ENCODE measurements at regions of chr9 and their contacts with region 1.

Region 1: GRCh38 chr9:83937911-83938323 is 16.7 kb upstream of the KIF27 start:
- DNase-seq: no peak
- H3K4me3 ChIP-seq: no peak overlapping the region
- H3K27ac ChIP-seq: no peak overlapping the region
- H3K4me1 ChIP-seq: peaks cover 18% of the 10 kb centered on the region
- H3K27me3 ChIP-seq: no peaks in the 10 kb centered on the region
- CTCF ChIP-seq: peak; percentile 55 to 79 (median 73)
- POLR2A ChIP-seq: no peak

Region 2: GRCh38 chr9:84170521-84171141 is 232.7 kb after region 1 on chr9:
- intact Hi-C with region 1: loop called (anchors 10 kb)
- DNase-seq: no peak
- H3K4me3 ChIP-seq: no peak overlapping the region
- H3K27ac ChIP-seq: no peak overlapping the region
- H3K4me1 ChIP-seq: no peaks in the 10 kb centered on the region
- H3K27me3 ChIP-seq: no peaks in the 10 kb centered on the region
- CTCF ChIP-seq: no peak
- POLR2A ChIP-seq: no peak

Region 3: GRCh38 chr9:84261082-84261746 is 323.3 kb after region 1 on chr9:
- intact Hi-C with region 1: loop called (anchors 5 kb)
- DNase-seq: no peak
- H3K4me3 ChIP-seq: peak overlapping the region in 1 of 2 donors; percentile 20
- H3K27ac ChIP-seq: no peak overlapping the region
- H3K4me1 ChIP-seq: peaks cover 7% of the 10 kb centered on the region
- H3K27me3 ChIP-seq: no peaks in the 10 kb centered on the region
- CTCF ChIP-seq: peak; percentile 64 to 88 (median 83)
- POLR2A ChIP-seq: no peak

Measured in vagina (tissue), 2 donors.